PC-9 (cell line): ENCODE measurements at regions of chr7 and their contacts with region 1.

Region 1: DNA sequence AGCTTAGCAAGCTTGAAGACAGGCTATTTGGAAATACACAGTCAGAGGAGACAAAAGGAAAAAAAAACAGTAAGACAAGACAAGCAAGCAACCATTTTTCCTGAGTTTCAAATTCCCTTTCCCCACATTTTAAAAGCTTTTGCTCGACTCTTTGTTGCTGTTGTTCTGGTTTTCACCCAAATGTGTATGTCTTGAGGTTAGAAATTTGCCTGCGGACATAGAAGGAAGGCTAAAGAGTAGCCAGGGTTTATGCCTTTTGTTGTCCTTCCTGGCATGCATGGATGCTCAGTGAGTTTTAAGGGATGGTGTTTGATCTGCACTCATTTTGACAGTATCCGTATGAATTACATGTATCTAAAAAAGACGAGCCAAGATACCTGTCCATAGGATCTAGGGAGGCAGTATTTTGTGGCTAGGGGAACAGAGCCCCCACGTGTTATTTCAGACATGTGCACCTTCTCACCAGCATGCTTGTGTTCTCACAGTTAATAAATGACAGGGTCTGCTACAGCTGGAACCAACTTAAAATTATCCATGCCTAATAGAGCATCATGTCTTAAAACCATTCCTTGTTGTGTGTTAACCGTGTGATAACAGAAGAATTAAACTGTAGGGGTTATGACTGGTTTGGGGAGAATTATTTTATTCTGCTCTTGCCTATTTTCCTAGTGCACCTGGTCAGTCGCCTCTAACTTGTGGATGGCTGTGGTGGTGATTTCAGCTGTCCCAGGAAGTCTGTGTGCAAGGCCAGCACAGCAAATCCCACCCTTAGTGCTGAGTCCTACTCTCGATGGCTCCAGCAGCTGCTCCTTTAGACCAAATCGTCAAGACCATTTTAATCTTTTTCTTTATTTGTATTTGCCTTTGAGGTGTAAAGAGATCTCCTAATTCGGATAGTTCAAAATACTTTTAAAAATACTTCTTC is 9.1 kb downstream of the WIPF3 start:
- DNase-seq: no peak
- H3K4me3 ChIP-seq: no peak overlapping the region
- H3K27ac ChIP-seq: no peak overlapping the region
- H3K4me1 ChIP-seq: no peaks in the 10 kb centered on the region
- H3K27me3 ChIP-seq: peaks cover 25% of the 10 kb centered on the region; the same call in 1 of the 2 replicates
- CTCF ChIP-seq: no peak

Region 2: DNA sequence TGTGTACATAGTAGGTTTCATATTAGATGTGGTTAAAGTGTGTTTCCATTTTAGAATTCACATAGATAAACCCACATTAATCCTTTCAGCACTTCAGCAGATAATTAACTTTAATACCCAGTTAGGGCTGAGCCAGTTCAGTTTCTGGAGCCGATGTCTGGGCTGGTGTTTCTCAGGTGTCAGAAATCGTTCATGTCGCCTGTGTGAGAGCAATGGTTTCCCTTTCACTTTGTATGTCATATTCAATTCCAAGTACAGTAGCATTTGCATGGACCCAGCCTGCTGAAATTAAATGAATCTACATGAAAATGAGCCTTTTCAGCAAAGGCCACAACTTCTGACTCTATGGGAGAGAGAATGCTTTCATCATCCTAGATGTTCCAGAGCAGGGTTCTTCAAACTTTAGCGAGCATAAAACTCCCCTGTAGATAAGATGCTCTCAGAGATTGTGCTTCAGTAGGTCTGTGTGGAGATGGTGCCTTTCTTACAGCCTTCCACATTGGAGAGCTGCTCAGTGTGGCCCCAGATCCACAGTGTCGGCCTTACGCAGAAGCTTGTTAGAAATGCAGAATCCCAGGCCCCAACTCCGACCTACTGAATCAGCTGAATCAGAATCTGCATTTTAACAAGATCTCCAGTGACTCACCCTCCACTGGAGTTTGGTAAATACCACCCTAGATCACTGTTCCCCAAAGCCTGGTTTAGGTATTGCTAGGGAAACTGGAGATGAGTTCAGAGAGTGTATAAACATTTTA is 10.5 kb after region 1 on chr7:
- CTCF ChIA-PET with region 1: no interaction called
- POLR2A ChIA-PET with region 1: interaction called, 12 read pairs
- intact Hi-C with region 1: no loop called
- DNase-seq: no peak
- H3K4me3 ChIP-seq: no peak overlapping the region
- H3K27ac ChIP-seq: no peak overlapping the region
- H3K4me1 ChIP-seq: no peaks in the 10 kb centered on the region
- H3K27me3 ChIP-seq: 0 out of 2 replicates have a peak, but pooled peaks cover 5% of the 10 kb centered on the region
- CTCF ChIP-seq: no peak

Region 3: GRCh38 chr7:29976673-29977415 is 161.4 kb after region 1 on chr7:
- CTCF ChIA-PET with region 1: no interaction called
- POLR2A ChIA-PET with region 1: no interaction called
- intact Hi-C with region 1: no loop called
- DNase-seq: no peak
- H3K4me3 ChIP-seq: no peak overlapping the region
- H3K27ac ChIP-seq: no peak overlapping the region
- H3K4me1 ChIP-seq: no peaks in the 10 kb centered on the region
- H3K27me3 ChIP-seq: no peaks in the 10 kb centered on the region
- CTCF ChIP-seq: no peak